ENCODE measurements at regions of chr18 and their contacts with region 1.

Region 1: GRCh38 chr18:23703057-23703986 is 14.1 kb downstream of the LAMA3 start:
- DNase-seq: peak; percentile 76
- H3K4me3 Mint-ChIP-seq: no peak overlapping the region
- H3K27ac Mint-ChIP-seq: no peak overlapping the region
- H3K4me1 Mint-ChIP-seq: peaks cover 5% of the 10 kb centered on the region
- H3K27me3 Mint-ChIP-seq: no peaks in the 10 kb centered on the region
- CTCF ChIP-seq: peak; percentile 62

Region 2: GRCh38 chr18:23515911-23516546 is 187.3 kb before region 1 on chr18:
- CTCF ChIA-PET with region 1: interaction called, 9 read pairs
- POLR2A ChIA-PET with region 1: no interaction called
- intact Hi-C with region 1: loop called (anchors 1 kb)
- DNase-seq: peak; percentile 79
- H3K4me3 Mint-ChIP-seq: no peak overlapping the region
- H3K27ac Mint-ChIP-seq: peak overlapping the region; percentile 10
- H3K4me1 Mint-ChIP-seq: peaks cover 17% of the 10 kb centered on the region
- H3K27me3 Mint-ChIP-seq: no peaks in the 10 kb centered on the region
- CTCF ChIP-seq: peak; percentile 70

Region 3: GRCh38 chr18:23612435-23613085 is 90.8 kb before region 1 on chr18:
- CTCF ChIA-PET with region 1: interaction called, 211 read pairs
- POLR2A ChIA-PET with region 1: no interaction called
- intact Hi-C with region 1: no loop called
- DNase-seq: no peak
- H3K4me3 Mint-ChIP-seq: no peak overlapping the region
- H3K27ac Mint-ChIP-seq: no peak overlapping the region
- H3K4me1 Mint-ChIP-seq: no peaks in the 10 kb centered on the region
- H3K27me3 Mint-ChIP-seq: no peaks in the 10 kb centered on the region
- CTCF ChIP-seq: no peak

Region 4: DNA sequence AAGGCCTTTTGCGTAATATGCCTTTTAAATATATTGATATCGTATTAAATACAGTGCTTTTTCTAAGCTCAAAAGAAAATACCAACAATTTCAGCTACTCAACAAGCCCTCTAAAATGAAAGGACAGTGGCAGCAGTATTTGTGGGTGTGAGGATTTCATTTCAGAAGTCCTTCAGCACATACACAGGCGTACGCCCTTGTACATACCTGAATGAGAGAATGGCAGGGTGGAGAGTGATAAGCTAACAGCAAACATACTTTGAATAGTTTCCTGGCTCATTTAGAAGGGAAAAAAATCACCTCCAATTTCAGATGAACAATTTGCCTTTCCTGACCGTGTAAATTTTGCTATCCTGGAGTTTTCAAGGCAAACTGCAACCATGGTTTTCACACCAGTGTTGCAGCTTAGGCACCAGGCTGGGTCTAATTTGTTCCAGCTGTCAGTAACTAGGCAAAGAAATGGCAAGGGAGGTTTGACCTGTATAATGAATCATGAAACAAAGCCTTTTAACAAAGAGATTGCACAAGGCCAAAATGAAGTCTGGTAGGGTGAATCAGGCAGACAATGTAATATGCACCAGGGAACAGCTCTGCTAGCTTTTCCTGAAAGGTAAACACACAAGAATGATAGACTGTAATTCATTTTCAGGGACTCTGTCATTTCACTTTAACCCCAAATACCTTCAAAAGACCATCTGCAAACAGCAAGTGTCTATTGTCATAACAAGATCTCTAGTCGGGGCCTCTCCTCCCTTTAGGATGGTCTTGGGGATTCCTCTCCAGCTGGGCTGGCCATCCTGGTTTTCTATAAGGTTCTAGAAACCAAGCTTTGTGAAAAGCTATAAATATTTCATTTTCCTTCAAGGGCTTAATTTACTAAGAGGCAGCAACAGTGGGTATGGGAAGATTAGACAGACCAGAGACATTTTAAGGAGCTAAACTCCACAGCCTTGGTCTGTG is 52.1 kb before region 1 on chr18:
- CTCF ChIA-PET with region 1: interaction called, 10 read pairs
- POLR2A ChIA-PET with region 1: interaction called, 3 read pairs
- intact Hi-C with region 1: no loop called
- DNase-seq: peak; percentile 74
- H3K4me3 Mint-ChIP-seq: no peak overlapping the region
- H3K27ac Mint-ChIP-seq: no peak overlapping the region
- H3K4me1 Mint-ChIP-seq: peaks cover 8% of the 10 kb centered on the region
- H3K27me3 Mint-ChIP-seq: no peaks in the 10 kb centered on the region
- CTCF ChIP-seq: no peak

Region 5: GRCh38 chr18:23714576-23714975 is 11.3 kb after region 1 on chr18:
- CTCF ChIA-PET with region 1: interaction called, 11 read pairs
- POLR2A ChIA-PET with region 1: no interaction called
- intact Hi-C with region 1: no loop called
- DNase-seq: no peak
- H3K4me3 Mint-ChIP-seq: no peak overlapping the region
- H3K27ac Mint-ChIP-seq: no peak overlapping the region
- H3K4me1 Mint-ChIP-seq: peaks cover 32% of the 10 kb centered on the region
- H3K27me3 Mint-ChIP-seq: no peaks in the 10 kb centered on the region
- CTCF ChIP-seq: no peak

Region 6: GRCh38 chr18:24118750-24119577 is 415.6 kb after region 1 on chr18:
- CTCF ChIA-PET with region 1: no interaction called
- POLR2A ChIA-PET with region 1: no interaction called
- intact Hi-C with region 1: loop called (anchors 5 kb)
- DNase-seq: peak; percentile 86
- H3K4me3 Mint-ChIP-seq: no peak overlapping the region
- H3K27ac Mint-ChIP-seq: no peak overlapping the region
- H3K4me1 Mint-ChIP-seq: peaks cover under 1% of the 10 kb centered on the region
- H3K27me3 Mint-ChIP-seq: no peaks in the 10 kb centered on the region
- CTCF ChIP-seq: peak; percentile 75

Region 7: DNA sequence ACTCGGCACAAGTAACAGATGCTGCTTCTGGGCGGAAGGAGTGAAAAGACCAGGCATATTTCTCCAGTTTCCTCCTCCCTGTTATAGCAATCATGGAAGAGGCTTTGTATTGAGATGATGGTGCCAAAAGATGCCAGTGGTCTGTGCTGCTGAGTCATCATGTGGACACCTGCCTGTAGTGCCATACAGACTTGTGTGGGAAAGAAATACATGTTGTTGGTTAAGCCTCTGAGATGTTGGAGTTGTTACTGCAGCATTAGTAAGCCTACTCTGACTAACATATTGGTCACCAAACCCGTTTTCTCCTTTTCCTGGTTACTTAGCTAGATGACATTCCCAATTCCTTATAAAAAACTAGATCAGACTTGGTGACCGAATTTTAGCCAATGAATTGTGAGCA is 1291.7 kb after region 1 on chr18:
- CTCF ChIA-PET with region 1: no interaction called
- POLR2A ChIA-PET with region 1: no interaction called
- intact Hi-C with region 1: no loop called
- DNase-seq: no peak
- H3K4me3 Mint-ChIP-seq: no peak overlapping the region
- H3K27ac Mint-ChIP-seq: no peak overlapping the region
- H3K4me1 Mint-ChIP-seq: no peaks in the 10 kb centered on the region
- H3K27me3 Mint-ChIP-seq: no peaks in the 10 kb centered on the region
- CTCF ChIP-seq: no peak

Measured in MCF 10A (cell line).